Endothelial cell of umbilical vein (primary cell): ENCODE measurements at regions of chr19 and their contacts with region 1.

Region 1: GRCh38 chr19:1315470-1316231 is 30.0 kb downstream of the EFNA2 start:
- DNase-seq: peak; percentile 31
- H3K4me3 ChIP-seq: no peak overlapping the region
- H3K27ac ChIP-seq: no peak overlapping the region
- H3K4me1 ChIP-seq: peaks cover 13% of the 10 kb centered on the region
- H3K27me3 ChIP-seq: peaks cover 17 to 18% of the 10 kb centered on the region in 2 experiments
- CTCF ChIP-seq: peak; percentile 41 to 64
- POLR2A ChIP-seq: no peak

Region 2: GRCh38 chr19:1355568-1356507 is 40.2 kb after region 1 on chr19:
- CTCF ChIA-PET with region 1: interaction called, 8 read pairs
- POLR2A ChIA-PET with region 1: no interaction called
- dilution Hi-C with region 1: no loop called
- intact Hi-C with region 1: loop called (anchors 5 kb)
- DNase-seq: peak; percentile 30
- H3K4me3 ChIP-seq: peak overlapping the region; percentile 55 to 95 (median 78)
- H3K27ac ChIP-seq: no peak overlapping the region
- H3K4me1 ChIP-seq: peaks cover 16% of the 10 kb centered on the region
- H3K27me3 ChIP-seq: no peaks in the 10 kb centered on the region
- CTCF ChIP-seq: no peak
- POLR2A ChIP-seq: no peak

Region 3: DNA sequence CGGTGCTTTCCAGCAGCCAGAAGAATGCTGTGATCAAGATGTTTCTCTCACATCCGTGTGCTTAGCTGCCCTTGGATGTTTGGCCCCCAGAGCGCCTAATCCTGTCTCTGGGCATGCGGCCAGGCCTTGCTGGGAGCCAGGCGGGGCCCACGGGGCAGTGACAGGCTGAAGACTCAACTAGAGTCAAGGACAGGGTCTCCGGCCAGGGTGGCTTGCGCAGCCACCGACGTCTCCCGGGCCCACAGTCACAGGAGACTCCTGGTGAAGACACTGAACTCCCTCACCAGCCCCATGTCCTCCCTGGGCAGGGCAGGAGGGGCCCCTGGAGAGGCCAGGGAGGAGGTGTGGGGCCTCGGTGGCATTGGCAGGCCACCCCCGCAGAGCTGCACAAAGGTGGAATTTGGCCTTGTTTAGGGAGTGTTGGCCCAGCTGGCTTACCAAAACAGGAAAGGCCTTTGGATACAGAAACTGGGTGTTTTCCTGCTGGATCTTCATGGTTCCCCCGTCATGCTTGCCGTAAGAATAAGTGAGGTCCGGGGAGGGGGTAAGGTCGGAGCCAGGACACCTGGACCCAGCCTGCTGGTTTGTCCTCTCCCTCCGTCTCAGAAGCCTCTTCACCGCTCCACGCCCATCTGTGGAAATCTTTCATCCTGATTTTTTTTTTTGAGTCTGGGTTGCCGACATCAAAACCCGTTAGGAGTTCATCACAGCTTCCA is 58.0 kb after region 1 on chr19:
- CTCF ChIA-PET with region 1: interaction called, 31 read pairs
- POLR2A ChIA-PET with region 1: no interaction called
- dilution Hi-C with region 1: no loop called
- intact Hi-C with region 1: no loop called
- DNase-seq: no peak
- H3K4me3 ChIP-seq: no peak overlapping the region
- H3K27ac ChIP-seq: no peak overlapping the region
- H3K4me1 ChIP-seq: no peaks in the 10 kb centered on the region
- H3K27me3 ChIP-seq: no peaks in the 10 kb centered on the region
- CTCF ChIP-seq: no peak
- POLR2A ChIP-seq: no peak

Region 4: DNA sequence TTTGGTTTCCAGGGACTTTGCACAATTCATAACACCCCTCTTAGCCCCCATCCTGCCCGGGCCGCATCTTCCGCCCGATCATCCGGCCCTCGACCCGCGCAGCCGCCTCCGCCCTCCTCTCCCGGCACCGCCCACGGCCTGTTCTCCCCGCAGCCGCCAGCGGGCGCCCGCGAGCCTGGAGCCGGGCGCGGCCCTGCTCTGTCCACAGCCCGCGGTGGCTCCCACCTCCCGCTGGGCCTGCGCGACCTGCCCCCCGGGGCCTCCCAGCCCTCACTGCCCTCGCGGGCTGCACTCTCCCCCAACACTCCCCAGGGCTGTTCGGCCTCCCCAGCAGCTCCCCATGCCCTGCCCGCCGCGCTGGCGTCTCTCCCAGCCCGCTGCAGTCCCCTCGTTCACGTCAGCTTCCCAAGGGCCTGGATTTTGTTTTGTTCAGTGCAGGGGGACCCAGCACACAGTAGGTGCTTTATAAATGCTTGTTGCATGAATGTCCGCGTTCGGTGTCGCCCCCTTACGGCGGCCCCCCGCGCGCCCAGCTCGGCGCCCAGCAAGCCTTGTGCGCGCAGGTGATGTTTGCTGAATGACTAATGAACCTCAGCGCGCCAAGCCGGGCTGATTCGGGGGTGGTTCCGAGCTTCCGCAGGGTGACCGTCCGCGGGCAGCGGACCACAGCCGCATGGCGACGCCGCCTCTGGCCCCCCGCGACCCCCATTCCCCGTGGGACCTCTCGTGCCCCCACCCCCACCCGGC is 129.7 kb after region 1 on chr19:
- CTCF ChIA-PET with region 1: no interaction called
- POLR2A ChIA-PET with region 1: no interaction called
- dilution Hi-C with region 1: no loop called
- intact Hi-C with region 1: no loop called
- DNase-seq: peak; percentile 52
- H3K4me3 ChIP-seq: peak overlapping the region in 1 of 3 experiments; percentile 14
- H3K27ac ChIP-seq: no peak overlapping the region
- H3K4me1 ChIP-seq: no peaks in the 10 kb centered on the region
- H3K27me3 ChIP-seq: peaks cover 14 to 33% of the 10 kb centered on the region in 2 experiments
- CTCF ChIP-seq: peak; percentile 81 to 96
- POLR2A ChIP-seq: no peak